ENCODE measurements at regions of chr6 and their contacts with region 1.

Region 1: DNA sequence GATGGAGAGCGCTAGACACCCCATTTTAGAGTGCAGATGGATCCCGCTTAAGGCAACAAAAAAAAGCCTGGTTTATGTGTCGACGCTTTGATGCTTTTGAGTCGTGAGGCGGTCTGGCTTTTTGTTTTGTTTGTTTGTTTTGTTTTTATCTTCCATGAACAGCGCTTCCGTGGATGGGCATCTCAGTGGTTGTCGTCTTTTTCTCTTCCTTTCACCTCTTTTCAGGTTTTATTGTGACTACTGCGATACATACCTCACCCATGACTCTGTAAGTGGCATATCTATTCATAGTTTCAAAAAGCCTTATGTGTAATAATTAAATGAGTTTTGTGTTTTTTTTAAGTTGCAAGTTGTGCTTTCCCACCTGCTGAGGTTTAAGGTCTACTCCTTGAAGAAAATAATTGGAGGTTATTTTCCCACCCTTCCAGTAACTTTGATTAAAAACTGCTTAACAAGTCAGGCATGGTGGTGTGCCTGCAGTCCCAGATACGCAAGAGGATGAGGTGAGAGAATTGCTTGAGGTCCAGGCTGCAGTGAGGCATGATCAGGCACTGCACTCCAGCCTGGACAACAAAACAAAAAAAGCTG is 476 bp downstream of the SNRPC start:
- DNase-seq: no peak
- ATAC-seq: peak in 1 of 2 donors; percentile 2
- H3K4me3 Mint-ChIP-seq: no peak overlapping the region
- H3K27ac Mint-ChIP-seq: no peak overlapping the region
- H3K4me1 Mint-ChIP-seq: peaks cover 0 to 26% (median 16%) of the 10 kb centered on the region in 4 donors
- H3K27me3 Mint-ChIP-seq: no peaks in the 10 kb centered on the region

Region 2: GRCh38 chr6:34671801-34672656 is 85.8 kb before region 1 on chr6:
- POLR2A ChIA-PET with region 1: interaction called, 10 read pairs
- DNase-seq: peak; percentile 42 to 88 (median 70)
- ATAC-seq: peak; percentile 93 to 99
- H3K4me3 Mint-ChIP-seq: peak overlapping the region; percentile 70 to 89 (median 82)
- H3K27ac Mint-ChIP-seq: peak overlapping the region; percentile 92 to 98 (median 97)
- H3K4me1 Mint-ChIP-seq: peaks cover 40 to 77% (median 69%) of the 10 kb centered on the region in 4 donors
- H3K27me3 Mint-ChIP-seq: no peaks in the 10 kb centered on the region

Region 3: DNA sequence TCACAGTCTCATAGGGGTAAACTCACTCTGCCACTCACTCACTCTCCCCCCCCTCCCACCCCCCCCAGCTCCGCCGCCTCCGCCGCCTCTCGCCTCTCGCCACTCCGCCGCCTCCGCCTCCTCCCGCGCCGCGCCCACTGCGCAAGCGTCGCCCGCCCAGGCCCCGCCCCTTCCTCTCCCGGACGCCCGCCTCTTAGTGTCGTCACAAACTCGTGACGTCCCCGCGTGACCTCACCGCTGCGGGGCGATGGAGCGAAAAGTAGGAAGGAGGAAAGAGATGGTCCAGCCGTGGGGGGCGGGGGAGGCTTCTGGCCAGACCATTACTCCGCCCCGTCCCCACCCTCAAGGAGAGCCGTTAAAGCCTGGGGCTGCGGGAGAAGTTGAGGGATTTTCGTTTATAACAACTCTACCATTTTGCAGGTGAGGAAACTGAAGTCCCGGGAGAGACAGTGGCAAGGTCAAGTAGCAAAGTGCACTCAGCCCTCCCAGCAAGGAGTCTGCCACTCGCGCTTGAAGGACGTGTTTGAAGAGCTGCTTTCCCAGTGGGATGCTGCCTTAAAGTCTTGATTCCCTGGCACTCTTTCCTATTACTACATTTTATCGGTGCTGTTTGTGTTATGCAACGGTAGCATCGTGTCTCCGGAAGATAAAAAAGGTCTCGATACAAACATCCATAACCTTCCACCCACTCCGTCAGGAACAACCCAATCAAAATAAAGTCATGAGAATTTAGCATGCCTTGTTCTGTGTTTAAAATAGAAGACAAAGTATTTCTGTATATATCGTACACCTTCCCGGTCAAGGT is 60.8 kb before region 1 on chr6 and contains the start of gene ILRUN:
- POLR2A ChIA-PET with region 1: interaction called, 13 read pairs
- DNase-seq: peak; percentile 91 to 98 (median 95)
- ATAC-seq: peak; percentile 79 to 84
- H3K4me3 Mint-ChIP-seq: peak within 1 kb of the TSS; percentile 86 to 99 (median 98)
- H3K27ac Mint-ChIP-seq: peak within 1 kb of the TSS; percentile 92 to 100 (median 99)
- H3K4me1 Mint-ChIP-seq: peaks cover 28 to 50% (median 48%) of the 10 kb centered on the region in 4 donors
- H3K27me3 Mint-ChIP-seq: peaks cover 0 to 2% (median 0%) of the 10 kb centered on the region in 5 donors
- polyA plus RNA-seq, gene ILRUN: 10.5 to 14.5 (median 11.7) TPM

Region 4: GRCh38 chr6:34729631-34730470 is 27.9 kb before region 1 on chr6:
- POLR2A ChIA-PET with region 1: no interaction called
- DNase-seq: no peak
- ATAC-seq: no peak
- H3K4me3 Mint-ChIP-seq: no peak overlapping the region
- H3K27ac Mint-ChIP-seq: no peak overlapping the region
- H3K4me1 Mint-ChIP-seq: no peaks in the 10 kb centered on the region
- H3K27me3 Mint-ChIP-seq: no peaks in the 10 kb centered on the region

Region 5: DNA sequence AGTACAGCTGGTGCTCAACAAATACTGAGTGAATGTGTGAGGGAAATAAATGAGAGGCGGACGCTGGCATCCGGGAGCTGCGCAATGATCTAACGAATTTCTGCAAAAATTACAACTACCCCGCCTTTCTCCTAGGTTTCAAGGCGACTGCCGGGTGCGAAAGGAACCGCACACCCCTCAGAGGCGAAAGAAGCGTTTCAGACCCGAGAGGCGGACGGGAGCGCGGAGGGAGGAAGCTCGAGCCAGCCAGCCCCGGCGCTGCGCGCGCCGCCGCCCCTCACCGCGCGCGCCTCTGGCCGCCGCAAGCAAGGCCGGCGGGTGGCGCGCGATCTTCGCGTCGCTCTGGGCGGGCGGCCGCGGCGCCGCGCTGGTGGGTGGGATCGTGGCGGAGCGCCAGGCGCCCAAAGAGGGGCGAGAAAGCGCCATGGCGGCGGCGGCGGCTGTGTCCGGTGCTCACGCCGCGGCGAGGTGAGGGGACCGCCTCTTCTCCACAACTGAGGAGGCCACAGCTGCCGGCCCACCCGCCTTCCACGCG is 34.0 kb after region 1 on chr6 and contains the start of gene BLTP3A:
- POLR2A ChIA-PET with region 1: interaction called, 21 read pairs
- DNase-seq: peak; percentile 63 to 84 (median 74)
- ATAC-seq: peak; percentile 93
- H3K4me3 Mint-ChIP-seq: peak within 1 kb of the TSS; percentile 91 to 99 (median 98)
- H3K27ac Mint-ChIP-seq: peak within 1 kb of the TSS; percentile 93 to 99 (median 97)
- H3K4me1 Mint-ChIP-seq: peaks cover 19 to 30% (median 28%) of the 10 kb centered on the region in 4 donors
- H3K27me3 Mint-ChIP-seq: no peaks in the 10 kb centered on the region
- polyA plus RNA-seq, gene BLTP3A: 1.4 to 1.5 (median 1.4) TPM

Region 6: GRCh38 chr6:34806738-34807453 is 49.1 kb after region 1 on chr6:
- POLR2A ChIA-PET with region 1: no interaction called
- DNase-seq: no peak
- ATAC-seq: no peak
- H3K4me3 Mint-ChIP-seq: no peak overlapping the region
- H3K27ac Mint-ChIP-seq: no peak overlapping the region
- H3K4me1 Mint-ChIP-seq: peaks cover 7 to 31% (median 14%) of the 10 kb centered on the region in 4 donors
- H3K27me3 Mint-ChIP-seq: no peaks in the 10 kb centered on the region

Region 7: DNA sequence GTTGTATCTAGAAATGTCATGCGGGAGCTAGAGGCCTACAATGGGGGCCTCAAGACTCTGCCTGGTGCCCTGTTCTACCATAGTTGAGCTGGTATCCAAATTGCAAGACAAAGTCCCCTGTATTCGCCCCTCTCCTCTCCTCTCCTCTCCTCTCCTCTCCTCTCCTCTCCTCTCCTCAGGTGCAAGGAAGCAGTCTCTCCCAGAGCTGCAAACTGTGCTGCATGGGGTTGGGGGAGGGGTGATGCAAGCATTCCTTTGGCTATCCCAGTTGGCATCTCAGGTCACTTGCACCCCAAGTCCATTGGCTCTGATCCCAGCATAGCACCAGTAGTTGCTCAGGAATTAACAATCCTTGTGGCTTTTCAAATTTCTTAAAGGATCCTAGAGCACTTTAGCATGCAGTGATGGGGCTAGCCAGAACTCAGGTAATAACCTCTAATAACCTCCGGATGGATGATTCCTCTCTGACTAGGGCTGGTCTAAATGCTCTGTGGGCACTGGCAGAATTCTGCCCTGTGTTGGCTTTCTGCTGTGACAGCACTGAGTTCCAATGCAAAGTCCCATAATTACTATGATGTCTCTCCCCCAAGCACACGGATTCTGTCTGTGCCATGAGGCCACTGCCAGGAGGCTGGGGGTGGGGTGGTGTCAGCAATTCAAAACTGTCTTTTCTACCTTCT is 94.8 kb after region 1 on chr6:
- POLR2A ChIA-PET with region 1: no interaction called
- DNase-seq: no peak
- ATAC-seq: no peak
- H3K4me3 Mint-ChIP-seq: no peak overlapping the region
- H3K27ac Mint-ChIP-seq: peak overlapping the region in 2 of 10 donors; percentile 50 to 62
- H3K4me1 Mint-ChIP-seq: peaks cover 0 to 6% (median under 1%) of the 10 kb centered on the region in 4 donors
- H3K27me3 Mint-ChIP-seq: no peaks in the 10 kb centered on the region

Region 8: DNA sequence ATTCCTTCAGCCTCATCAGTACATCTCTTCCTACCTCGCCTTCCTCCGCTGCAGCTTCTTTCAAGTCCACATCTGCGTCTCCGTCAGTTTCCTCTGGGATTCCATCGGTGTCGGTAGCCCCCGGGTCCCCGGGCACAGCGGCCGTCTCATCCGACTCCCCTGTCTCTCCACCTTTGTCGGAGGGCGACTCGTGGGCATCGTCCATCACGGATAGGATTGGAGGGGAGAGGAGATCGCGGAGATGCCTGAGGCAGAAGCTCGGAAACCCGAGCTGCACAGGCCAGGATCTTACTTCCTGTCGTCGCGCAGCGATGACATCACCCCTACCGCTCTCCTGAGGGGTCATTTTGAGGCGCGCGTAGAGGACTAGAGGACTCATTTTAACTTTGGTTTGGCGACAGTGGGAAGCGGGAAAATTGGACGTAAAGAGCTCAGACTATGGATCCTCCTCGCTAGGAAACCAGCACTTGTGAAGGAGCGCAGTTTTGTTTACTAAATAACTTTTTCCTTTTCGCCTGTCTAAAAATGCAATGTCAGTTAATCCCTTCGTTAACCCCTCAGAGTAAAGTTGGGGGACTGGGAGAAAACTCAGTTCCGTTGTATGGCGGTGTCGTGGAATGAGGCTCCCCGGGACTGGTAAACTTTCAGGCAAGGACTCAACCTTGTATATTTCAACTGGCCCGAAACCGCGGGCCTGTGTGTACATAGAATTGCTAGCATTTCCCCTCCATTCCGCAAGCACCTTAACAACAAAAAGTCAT is 130.2 kb after region 1 on chr6 and contains the start of gene TAF11:
- POLR2A ChIA-PET with region 1: interaction called, 22 read pairs
- DNase-seq: peak; percentile 77 to 95 (median 88)
- ATAC-seq: peak; percentile 68 to 69
- H3K4me3 Mint-ChIP-seq: peak within 1 kb of the TSS; percentile 99 to 100 (median 100)
- H3K27ac Mint-ChIP-seq: peak within 1 kb of the TSS; percentile 97 to 100 (median 100)
- H3K4me1 Mint-ChIP-seq: peaks cover 28 to 65% (median 58%) of the 10 kb centered on the region in 4 donors
- H3K27me3 Mint-ChIP-seq: no peaks in the 10 kb centered on the region
- polyA plus RNA-seq, gene TAF11: 11.2 to 18.2 (median 13.7) TPM

Region 9: GRCh38 chr6:35297601-35298481 is 540.1 kb after region 1 on chr6 and contains the start of gene DEF6:
- POLR2A ChIA-PET with region 1: no interaction called
- DNase-seq: peak; percentile 76 to 93 (median 86)
- ATAC-seq: peak; percentile 82 to 87
- H3K4me3 Mint-ChIP-seq: peak within 1 kb of the TSS; percentile 82 to 98 (median 90)
- H3K27ac Mint-ChIP-seq: peak within 1 kb of the TSS; percentile 91 to 100 (median 97)
- H3K4me1 Mint-ChIP-seq: peaks cover 30 to 50% (median 47%) of the 10 kb centered on the region in 4 donors
- H3K27me3 Mint-ChIP-seq: no peaks in the 10 kb centered on the region
- polyA plus RNA-seq, gene DEF6: 93.7 to 196 (median 136) TPM